ENCODE measurements at regions of chr12 and their contacts with region 1.

Region 1: DNA sequence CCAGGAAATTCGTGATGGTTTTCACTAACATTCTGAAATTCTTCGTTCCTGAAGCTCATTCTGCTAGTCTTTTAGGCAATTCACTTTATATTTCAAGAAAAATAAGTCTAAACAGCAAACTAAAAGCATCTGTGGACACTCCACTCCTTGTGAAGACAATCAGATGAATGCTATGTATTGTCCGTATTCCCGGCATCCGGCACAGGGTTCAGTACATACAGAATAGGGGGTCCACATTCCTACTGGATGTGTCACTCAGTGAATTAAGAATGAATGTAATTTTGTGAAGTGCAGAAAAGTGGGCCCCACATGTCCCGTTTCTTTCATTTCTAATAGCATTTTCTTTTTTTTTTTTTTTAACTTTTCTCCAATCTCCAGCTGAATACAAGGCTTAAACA is 241.3 kb downstream of the GRIN2B start:
- DNase-seq: no peak
- ATAC-seq: no peak

Region 2: DNA sequence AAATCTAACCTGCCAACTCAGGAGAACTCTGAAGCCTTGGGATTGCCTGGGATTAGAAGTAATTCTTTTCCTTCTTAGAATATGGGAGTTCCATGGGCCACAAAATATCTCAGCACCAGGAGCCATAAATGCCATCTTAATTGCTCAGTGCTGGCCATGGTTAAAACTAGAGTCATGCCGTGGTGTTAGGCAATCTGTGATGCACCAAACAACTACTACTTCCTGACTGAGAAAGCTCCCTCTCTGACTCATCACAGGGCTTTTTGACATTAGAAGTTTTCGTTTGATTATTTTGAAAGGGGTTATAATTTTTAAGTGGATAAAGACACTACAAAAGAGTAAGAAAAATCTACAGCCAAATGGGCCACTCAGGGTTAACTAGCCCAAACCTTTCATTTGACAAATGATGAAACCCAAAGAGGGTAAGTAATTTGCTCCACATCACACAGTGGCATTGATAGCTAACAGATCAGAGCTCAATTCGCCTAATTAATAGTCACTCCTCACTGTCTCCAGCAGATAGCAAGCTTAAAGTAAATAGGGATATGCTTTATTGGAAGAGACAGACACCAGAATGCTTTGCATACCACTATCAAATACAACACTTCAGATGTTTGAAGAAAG is 166.3 kb before region 1 on chr12:
- intact Hi-C with region 1: no loop called
- DNase-seq: no peak
- ATAC-seq: peak in 1 of 2 donors; percentile 34

Region 3: DNA sequence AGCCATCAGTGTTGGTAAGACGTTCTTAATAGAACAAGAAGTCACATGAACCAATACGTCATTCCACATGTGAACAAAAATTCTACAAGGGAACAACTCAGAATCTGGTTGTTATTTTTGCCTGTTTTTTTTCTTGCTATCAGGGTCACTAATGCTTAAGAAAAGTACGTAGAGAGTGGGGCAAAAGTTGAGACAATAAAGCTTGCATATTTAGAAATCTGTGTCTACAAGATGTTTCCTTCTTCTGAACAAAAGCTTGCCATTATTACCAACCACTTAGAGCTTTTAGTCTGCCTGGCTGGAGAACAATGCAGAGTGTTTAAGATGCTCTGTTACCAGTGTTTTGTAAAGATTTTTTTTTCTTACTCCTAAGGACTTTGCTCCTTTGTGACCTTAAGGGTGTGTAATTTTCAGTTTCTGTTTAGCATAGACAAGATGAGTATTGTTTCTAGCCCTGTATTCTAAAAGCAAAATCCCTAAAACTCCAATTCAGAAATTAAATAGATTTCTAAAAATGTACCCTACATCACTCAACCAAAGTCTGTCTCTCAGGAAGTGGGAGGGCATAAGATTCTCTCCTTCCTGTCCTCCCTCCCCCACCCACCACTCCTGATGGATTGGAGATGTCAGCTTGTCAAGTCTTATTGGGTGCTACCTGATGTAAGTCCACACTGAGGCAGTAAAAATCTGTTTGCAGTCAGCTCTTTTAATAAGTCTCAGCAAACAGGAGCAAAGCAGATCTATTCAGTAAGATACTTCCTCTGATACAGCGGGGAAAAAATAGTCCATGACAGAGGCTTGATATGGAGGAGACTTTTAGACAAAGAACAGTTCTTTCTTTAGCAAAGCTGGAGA is 26.4 kb before region 1 on chr12:
- intact Hi-C with region 1: no loop called
- DNase-seq: no peak
- ATAC-seq: no peak

Region 4: DNA sequence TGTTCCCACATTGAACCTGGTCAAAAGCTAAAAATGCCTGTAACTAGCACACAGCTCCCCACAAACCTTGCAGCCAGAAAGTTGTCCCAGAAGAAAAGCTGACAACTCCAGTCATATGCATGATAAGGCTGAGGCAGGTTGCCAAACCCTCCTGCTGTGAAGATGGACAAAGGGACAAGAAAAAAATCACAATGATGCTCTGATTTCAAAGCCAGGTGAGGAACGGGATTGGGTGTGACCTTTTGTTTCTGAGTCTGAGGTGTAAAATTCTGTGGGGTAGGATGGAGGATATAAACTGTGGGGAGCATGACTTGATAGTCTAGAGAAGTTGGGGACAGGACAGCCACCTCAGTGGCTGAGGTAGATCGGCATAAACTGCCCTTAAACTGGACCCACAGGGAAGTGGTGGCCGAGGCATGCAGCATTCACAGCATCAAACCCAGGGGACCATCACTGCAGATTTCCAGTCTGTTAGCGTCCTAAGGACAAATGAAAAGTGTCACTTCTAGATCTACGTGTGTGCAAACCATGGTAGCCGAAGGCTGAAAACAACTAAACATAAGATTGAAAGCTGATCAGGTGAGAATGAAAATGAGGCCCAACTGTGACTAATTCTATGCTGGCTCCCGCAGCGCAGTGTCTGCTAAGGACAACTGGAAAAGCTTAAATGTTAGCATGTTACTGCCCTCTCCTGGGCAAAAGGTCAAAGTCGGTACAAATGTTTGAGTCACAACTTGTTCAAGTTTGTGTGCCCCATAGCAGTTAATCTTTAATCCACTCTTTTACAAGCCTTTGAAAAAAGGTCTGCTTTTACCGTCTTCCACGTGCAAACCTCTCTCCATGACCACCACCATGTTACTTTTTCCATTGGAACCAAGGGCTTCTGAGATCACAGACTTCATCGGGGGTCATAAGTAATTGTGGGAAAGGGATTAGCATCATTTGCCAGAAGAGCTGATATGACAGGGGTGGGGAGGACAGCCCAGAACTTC is 201.4 kb after region 1 on chr12:
- intact Hi-C with region 1: loop called in 1 of 2 experiments (anchors 2 kb)
- DNase-seq: peak; percentile 33
- ATAC-seq: peak; percentile 82 to 84

Region 5: GRCh38 chr12:13981990-13982389 is 241.8 kb after region 1 on chr12:
- intact Hi-C with region 1: no loop called
- DNase-seq: no peak
- ATAC-seq: no peak

Measured in left cardiac atrium (tissue), 4 donors.